ENCODE measurements at regions of chr12 and their contacts with region 1.

Region 1: DNA sequence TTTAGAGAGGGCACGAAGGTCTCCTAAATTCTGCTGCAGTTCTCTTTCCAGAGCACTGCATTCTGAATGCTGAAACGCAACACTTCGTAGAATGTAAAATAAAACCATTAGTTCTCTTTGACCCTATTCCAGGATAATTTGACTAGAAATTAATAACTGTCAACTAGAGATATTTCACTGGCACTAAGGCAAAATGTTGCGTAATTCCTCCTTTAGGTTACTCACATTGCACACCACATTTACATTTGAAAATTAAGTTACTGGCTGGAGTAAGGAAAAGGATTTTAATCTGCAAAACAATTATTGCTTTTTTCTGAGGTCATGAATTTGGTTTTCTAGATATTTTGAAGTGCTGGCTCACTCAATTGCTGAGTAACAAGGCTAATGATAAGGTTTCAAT is 58.0 kb upstream of the TRHDE start:
- DNase-seq: no peak
- ATAC-seq: no peak
- H3K4me3 ChIP-seq: no peak overlapping the region
- H3K4me3 Mint-ChIP-seq: no peak overlapping the region
- H3K27ac ChIP-seq: no peak overlapping the region
- H3K27ac Mint-ChIP-seq: no peak overlapping the region
- H3K4me1 ChIP-seq: no peaks in the 10 kb centered on the region
- H3K4me1 Mint-ChIP-seq: no peaks in the 10 kb centered on the region
- H3K27me3 ChIP-seq: no peaks in the 10 kb centered on the region
- H3K27me3 Mint-ChIP-seq: no peaks in the 10 kb centered on the region
- CTCF ChIP-seq: no peak

Region 2: DNA sequence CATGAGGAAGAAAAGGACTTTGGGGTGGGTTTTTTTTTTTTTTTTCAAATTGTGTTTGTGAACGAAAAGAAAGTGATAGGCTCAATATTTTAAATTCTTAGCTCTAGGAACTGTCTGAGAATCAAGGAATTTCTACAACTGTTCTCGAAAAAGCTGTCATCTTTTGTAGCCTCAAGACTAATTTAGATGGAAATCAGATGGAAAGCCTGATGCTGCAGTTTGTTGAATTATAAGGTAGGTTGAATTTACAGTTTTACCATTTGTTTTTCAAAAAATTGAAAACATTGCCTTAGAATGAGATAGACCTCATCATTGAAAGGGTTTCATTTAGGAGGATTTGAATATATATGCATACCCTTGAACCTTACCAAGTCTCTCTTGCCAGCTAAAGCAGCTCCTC is 51.3 kb before region 1 on chr12:
- CTCF ChIA-PET with region 1: no interaction called
- POLR2A ChIA-PET with region 1: no interaction called
- intact Hi-C with region 1: loop called in 1 of 2 experiments (anchors 5 kb)
- DNase-seq: no peak
- ATAC-seq: no peak
- H3K4me3 ChIP-seq: no peak overlapping the region
- H3K4me3 Mint-ChIP-seq: no peak overlapping the region
- H3K27ac ChIP-seq: no peak overlapping the region
- H3K27ac Mint-ChIP-seq: no peak overlapping the region
- H3K4me1 ChIP-seq: no peaks in the 10 kb centered on the region
- H3K4me1 Mint-ChIP-seq: no peaks in the 10 kb centered on the region
- H3K27me3 ChIP-seq: no peaks in the 10 kb centered on the region
- H3K27me3 Mint-ChIP-seq: no peaks in the 10 kb centered on the region
- CTCF ChIP-seq: no peak

Region 3: GRCh38 chr12:72178871-72179270 is 35.3 kb before region 1 on chr12:
- CTCF ChIA-PET with region 1: no interaction called
- POLR2A ChIA-PET with region 1: no interaction called
- intact Hi-C with region 1: no loop called
- DNase-seq: no peak
- ATAC-seq: no peak
- H3K4me3 ChIP-seq: no peak overlapping the region
- H3K4me3 Mint-ChIP-seq: no peak overlapping the region
- H3K27ac ChIP-seq: no peak overlapping the region
- H3K27ac Mint-ChIP-seq: no peak overlapping the region
- H3K4me1 ChIP-seq: no peaks in the 10 kb centered on the region
- H3K4me1 Mint-ChIP-seq: no peaks in the 10 kb centered on the region
- H3K27me3 ChIP-seq: no peaks in the 10 kb centered on the region
- H3K27me3 Mint-ChIP-seq: no peaks in the 10 kb centered on the region
- CTCF ChIP-seq: no peak

Region 4: DNA sequence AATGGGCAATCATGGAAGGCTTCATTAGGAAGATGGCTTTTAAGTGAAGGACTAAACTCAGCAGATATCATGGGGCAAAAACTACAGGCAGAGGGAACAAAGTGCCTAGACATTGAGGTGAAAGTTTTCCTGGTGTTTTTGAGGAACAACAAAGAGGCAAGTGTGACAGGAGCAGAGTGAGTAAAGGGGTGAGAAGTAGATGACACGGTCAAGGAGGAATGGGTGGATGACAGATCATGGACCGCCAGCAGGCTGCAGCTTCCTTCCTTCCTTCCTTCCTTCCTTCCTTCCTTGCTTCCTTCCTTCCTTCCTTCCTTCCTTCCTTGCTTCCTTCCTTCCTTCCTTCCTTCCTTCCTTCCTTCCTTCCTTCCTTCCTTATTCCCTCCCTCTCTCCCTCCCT is 166.3 kb after region 1 on chr12:
- CTCF ChIA-PET with region 1: no interaction called
- POLR2A ChIA-PET with region 1: no interaction called
- intact Hi-C with region 1: no loop called
- DNase-seq: no peak
- ATAC-seq: no peak
- H3K4me3 ChIP-seq: no peak overlapping the region
- H3K4me3 Mint-ChIP-seq: no peak overlapping the region
- H3K27ac ChIP-seq: no peak overlapping the region
- H3K27ac Mint-ChIP-seq: no peak overlapping the region
- H3K4me1 ChIP-seq: no peaks in the 10 kb centered on the region
- H3K4me1 Mint-ChIP-seq: no peaks in the 10 kb centered on the region
- H3K27me3 ChIP-seq: no peaks in the 10 kb centered on the region
- H3K27me3 Mint-ChIP-seq: no peaks in the 10 kb centered on the region
- CTCF ChIP-seq: no peak